ENCODE measurements at regions of chr1 and their contacts with region 1.

Region 1: GRCh38 chr1:228165372-228166169 is at the start of gene IBA57:
- DNase-seq: peak; percentile 99
- H3K4me3 ChIP-seq: peak within 1 kb of the TSS; percentile 83
- H3K4me3 Mint-ChIP-seq: peak within 1 kb of the TSS; percentile 84
- H3K27ac Mint-ChIP-seq: peak within 1 kb of the TSS; percentile 93
- H3K4me1 ChIP-seq: peaks cover 17% of the 10 kb centered on the region
- H3K4me1 Mint-ChIP-seq: peaks cover 8% of the 10 kb centered on the region
- H3K27me3 ChIP-seq: no peaks in the 10 kb centered on the region
- H3K27me3 Mint-ChIP-seq: no peaks in the 10 kb centered on the region
- CTCF ChIP-seq: peak; percentile 80 to 94
- total RNA-seq, gene IBA57: 14.3 and 15.4 TPM in 2 replicates

Region 2: DNA sequence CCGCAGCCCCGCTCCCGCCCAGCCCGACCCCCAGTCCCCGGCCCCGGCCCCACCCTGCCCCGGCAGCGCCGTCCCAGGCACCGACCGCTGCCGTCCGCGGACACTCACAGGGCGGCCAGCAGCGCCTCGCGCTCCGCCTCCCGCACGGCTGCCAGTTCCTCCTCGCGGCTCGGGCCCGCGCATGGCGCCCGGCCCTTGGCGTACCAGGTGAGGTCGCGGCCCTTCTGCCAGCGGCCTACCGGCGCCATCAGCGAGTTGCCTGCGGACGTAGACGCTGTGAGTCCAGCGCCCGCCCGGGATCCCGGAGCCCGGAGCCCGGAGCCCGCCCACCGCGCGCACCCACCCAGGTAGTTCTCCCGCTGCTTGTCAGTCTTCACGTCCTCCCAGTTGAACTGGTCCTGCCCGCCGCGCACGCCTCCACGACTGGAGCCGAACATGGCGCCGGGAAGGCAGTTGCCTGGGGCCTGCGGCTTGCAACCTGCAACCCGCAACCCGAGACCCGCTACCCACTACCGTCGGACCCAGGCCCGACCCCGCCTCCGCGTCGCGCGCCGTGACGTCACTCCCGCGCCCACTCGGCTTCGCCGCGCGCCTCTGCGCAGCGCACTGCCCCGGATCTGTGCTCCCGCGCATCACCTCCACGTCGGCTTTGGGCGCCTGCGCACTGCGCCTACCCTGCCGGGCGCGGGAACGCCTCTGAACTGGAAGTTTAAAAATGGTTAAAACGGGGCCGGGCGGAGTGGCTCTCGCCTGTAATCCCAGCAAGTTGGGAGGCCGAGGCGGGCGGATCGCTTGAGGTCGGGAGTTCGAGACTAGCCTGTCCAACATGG is 62.6 kb before region 1 on chr1 and contains the start of gene C1orf35:
- CTCF ChIA-PET with region 1: no interaction called
- POLR2A ChIA-PET with region 1: no interaction called
- intact Hi-C with region 1: no loop called
- DNase-seq: peak; percentile 95 to 97
- H3K4me3 ChIP-seq: peak within 1 kb of the TSS; percentile 98
- H3K4me3 Mint-ChIP-seq: peak within 1 kb of the TSS; percentile 93
- H3K27ac Mint-ChIP-seq: peak within 1 kb of the TSS; percentile 97
- H3K4me1 ChIP-seq: peaks cover 23% of the 10 kb centered on the region
- H3K4me1 Mint-ChIP-seq: peaks cover 14% of the 10 kb centered on the region
- H3K27me3 ChIP-seq: no peaks in the 10 kb centered on the region
- H3K27me3 Mint-ChIP-seq: no peaks in the 10 kb centered on the region
- CTCF ChIP-seq: no peak
- total RNA-seq, gene C1orf35: 34.2 and 34.5 TPM in 2 replicates

Region 3: DNA sequence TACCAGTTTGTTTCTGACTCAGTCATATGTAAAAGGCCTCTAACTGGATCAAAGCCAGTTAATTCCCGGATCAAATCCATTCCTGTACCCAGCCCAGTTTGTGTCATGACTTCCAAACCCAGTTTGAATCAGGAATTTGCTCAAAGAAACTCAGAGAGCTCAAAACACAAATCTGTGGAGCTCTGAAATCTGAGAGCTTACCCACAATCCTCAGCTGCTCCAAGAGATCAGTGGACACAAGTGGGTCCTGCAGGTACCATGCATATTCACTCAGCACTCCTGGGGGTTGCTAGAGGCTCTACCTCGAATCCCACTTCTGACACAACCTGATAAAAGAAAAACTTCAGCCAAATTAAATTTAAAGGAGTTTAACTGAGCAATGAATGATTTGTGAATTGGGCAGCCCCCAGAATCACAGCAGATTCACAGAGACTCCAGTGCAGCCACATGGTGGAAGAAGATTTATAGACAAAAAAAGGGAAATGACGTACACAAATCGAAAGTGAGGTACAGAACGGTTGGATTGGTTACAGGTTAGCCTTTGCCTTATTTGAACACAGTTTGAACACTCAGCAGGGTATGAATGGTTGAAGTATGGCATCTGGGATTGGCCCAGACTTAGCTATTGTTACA is 44.6 kb before region 1 on chr1:
- CTCF ChIA-PET with region 1: no interaction called
- POLR2A ChIA-PET with region 1: no interaction called
- intact Hi-C with region 1: no loop called
- DNase-seq: no peak
- H3K4me3 ChIP-seq: no peak overlapping the region
- H3K4me3 Mint-ChIP-seq: no peak overlapping the region
- H3K27ac Mint-ChIP-seq: no peak overlapping the region
- H3K4me1 ChIP-seq: peaks cover 7% of the 10 kb centered on the region; the same call in 1 of the 2 replicates
- H3K4me1 Mint-ChIP-seq: no peaks in the 10 kb centered on the region
- H3K27me3 ChIP-seq: no peaks in the 10 kb centered on the region
- H3K27me3 Mint-ChIP-seq: no peaks in the 10 kb centered on the region
- CTCF ChIP-seq: no peak

Region 4: DNA sequence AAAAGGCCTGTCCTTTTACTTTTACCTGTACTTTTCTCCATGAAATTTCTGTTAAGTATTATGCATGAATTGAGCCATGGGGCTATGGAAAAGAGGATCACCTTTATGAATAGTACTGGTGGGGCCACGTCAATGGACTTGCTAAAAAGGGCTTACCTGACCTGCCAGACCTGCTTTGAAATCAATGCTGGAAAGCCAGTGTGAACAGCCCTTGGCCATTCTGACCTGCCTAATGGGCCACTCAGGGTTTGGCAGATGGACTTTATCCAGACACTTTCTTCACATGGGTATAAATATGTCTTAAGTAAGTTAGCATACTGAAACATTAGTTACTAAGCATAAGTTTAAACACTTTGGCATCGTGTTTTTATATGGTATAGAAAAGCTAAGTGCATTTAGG is 33.8 kb before region 1 on chr1:
- CTCF ChIA-PET with region 1: interaction called, 19 read pairs
- POLR2A ChIA-PET with region 1: interaction called, 6 read pairs
- intact Hi-C with region 1: loop called (anchors 1 kb)
- DNase-seq: peak in 1 of 2 experiments; percentile 29
- H3K4me3 ChIP-seq: no peak overlapping the region
- H3K4me3 Mint-ChIP-seq: peak overlapping the region; percentile 90
- H3K27ac Mint-ChIP-seq: peak overlapping the region; percentile 90
- H3K4me1 ChIP-seq: peaks cover 12% of the 10 kb centered on the region
- H3K4me1 Mint-ChIP-seq: no peaks in the 10 kb centered on the region
- H3K27me3 ChIP-seq: no peaks in the 10 kb centered on the region
- H3K27me3 Mint-ChIP-seq: no peaks in the 10 kb centered on the region
- CTCF ChIP-seq: no peak

Region 5: GRCh38 chr1:228139944-228140656 is 25.5 kb before region 1 on chr1 and contains the start of gene GUK1:
- CTCF ChIA-PET with region 1: interaction called, 4 read pairs
- POLR2A ChIA-PET with region 1: interaction called, 9 read pairs
- intact Hi-C with region 1: loop called (anchors 1 kb)
- DNase-seq: peak; percentile 100
- H3K4me3 ChIP-seq: peak within 1 kb of the TSS; percentile 90
- H3K4me3 Mint-ChIP-seq: peak within 1 kb of the TSS; percentile 85
- H3K27ac Mint-ChIP-seq: peak within 1 kb of the TSS; percentile 91
- H3K4me1 ChIP-seq: peaks cover 5% of the 10 kb centered on the region
- H3K4me1 Mint-ChIP-seq: no peaks in the 10 kb centered on the region
- H3K27me3 ChIP-seq: no peaks in the 10 kb centered on the region
- H3K27me3 Mint-ChIP-seq: no peaks in the 10 kb centered on the region
- CTCF ChIP-seq: peak in 1 of 2 experiments; percentile 23
- total RNA-seq, gene GUK1: 73.6 and 74.4 TPM in 2 replicates

Region 6: DNA sequence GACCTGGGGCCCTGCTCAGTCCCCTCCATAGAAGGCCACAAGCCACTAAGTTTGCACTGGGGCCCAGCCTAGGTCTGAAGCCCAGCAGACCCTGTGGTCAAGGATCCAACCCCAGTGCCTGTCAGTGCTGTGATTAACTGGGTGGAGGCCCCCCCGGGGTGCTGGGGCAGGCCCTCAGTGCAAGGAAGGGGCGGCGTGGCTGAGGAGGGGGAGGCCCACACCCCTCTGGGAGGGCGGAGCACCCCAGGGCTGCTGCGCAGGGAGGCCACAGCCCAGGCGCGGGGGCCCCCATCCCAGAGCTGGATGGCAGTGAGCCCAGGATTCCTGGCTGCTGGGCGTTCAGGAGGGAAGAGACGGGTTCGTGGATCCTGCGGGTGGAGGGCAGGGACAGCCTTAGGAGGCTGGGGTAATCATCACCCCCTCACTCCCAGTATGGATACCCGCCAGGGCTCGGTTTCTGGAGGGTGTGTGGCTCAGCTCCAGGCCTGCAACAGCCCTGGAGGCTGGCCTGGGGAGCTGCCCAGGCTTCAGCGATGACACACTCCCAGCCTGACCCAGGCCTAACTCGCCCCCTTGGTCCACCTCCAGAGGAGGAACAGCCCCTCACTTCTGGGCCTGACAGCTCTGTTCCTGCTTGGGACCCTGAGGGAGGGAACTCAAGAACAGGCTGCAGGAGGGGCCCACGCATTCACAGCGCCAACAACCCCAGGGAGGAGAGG is 15.0 kb before region 1 on chr1:
- CTCF ChIA-PET with region 1: no interaction called
- POLR2A ChIA-PET with region 1: interaction called, 10 read pairs
- intact Hi-C with region 1: no loop called
- DNase-seq: peak in 1 of 2 experiments; percentile 32
- H3K4me3 ChIP-seq: no peak overlapping the region
- H3K4me3 Mint-ChIP-seq: no peak overlapping the region
- H3K27ac Mint-ChIP-seq: no peak overlapping the region
- H3K4me1 ChIP-seq: peaks cover 6% of the 10 kb centered on the region; the same call in 1 of the 2 replicates
- H3K4me1 Mint-ChIP-seq: no peaks in the 10 kb centered on the region
- H3K27me3 ChIP-seq: no peaks in the 10 kb centered on the region
- H3K27me3 Mint-ChIP-seq: no peaks in the 10 kb centered on the region
- CTCF ChIP-seq: no peak